ENCODE measurements at regions of chr6 and their contacts with region 1.

Region 1: GRCh38 chr6:158366363-158366762 is 54.1 kb downstream of the TULP4 start:
- DNase-seq: no peak
- H3K4me3 ChIP-seq: no peak overlapping the region
- H3K27ac ChIP-seq: peak overlapping the region in 9 of 59 donors; percentile 6 to 42 (median 22)
- H3K27me3 ChIP-seq: no peaks in the 10 kb centered on the region
- CTCF ChIP-seq: no peak

Region 2: DNA sequence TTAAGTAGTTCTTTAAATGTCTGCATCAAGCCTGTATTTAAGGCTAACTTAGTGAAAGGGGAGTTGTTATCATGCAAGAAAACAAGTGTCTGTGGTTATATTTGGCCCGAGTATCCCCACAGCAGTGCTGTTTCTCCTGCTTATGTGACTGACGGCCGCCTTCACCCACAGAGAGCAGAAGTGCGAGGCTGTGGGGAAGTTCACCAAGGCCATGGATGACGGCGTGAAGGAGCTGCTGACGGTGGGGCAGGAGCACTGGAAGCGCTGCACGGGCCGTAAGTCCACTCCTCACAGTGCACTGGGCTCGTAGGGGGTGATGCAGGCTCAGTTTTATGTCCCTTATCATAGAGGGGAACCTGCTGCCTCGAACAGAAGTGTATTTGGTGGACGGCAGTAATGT is 437.9 kb before region 1 on chr6:
- intact Hi-C with region 1: no loop called
- DNase-seq: no peak
- H3K4me3 ChIP-seq: peak overlapping the region in 1 of 59 donors; percentile 22
- H3K27ac ChIP-seq: peak overlapping the region in 57 of 59 donors; percentile 17 to 93 (median 84)
- H3K27me3 ChIP-seq: no peaks in the 10 kb centered on the region
- CTCF ChIP-seq: no peak

Region 3: DNA sequence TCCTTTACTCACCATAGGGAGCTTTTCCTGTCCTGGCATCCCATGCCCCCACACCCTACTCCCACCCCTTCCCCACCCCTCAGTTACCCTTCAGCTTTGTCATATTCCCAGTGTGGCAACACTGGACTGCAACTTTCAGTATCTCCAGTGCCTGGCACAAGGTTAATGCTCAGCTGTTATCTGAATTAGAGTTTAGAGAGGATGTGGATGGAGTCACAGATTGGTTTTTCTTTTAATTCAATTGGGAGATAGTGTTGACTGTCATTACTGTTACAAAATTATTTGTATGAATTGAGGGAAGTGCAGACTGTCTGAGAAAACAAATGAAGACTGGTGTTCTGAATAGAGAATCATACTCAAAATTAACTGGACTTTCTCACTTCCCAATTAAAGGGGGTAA is 35.8 kb after region 1 on chr6:
- intact Hi-C with region 1: loop called in 1 of 2 experiments (anchors 5 kb)
- DNase-seq: no peak
- H3K4me3 ChIP-seq: no peak overlapping the region
- H3K27ac ChIP-seq: peak overlapping the region in 48 of 59 donors; percentile 1 to 75 (median 50)
- H3K27me3 ChIP-seq: no peaks in the 10 kb centered on the region
- CTCF ChIP-seq: no peak

Measured in dorsolateral prefrontal cortex (tissue), 120 donors.